A549 (cell line): ENCODE measurements at regions of chr7 and their contacts with region 1.

Region 1: DNA sequence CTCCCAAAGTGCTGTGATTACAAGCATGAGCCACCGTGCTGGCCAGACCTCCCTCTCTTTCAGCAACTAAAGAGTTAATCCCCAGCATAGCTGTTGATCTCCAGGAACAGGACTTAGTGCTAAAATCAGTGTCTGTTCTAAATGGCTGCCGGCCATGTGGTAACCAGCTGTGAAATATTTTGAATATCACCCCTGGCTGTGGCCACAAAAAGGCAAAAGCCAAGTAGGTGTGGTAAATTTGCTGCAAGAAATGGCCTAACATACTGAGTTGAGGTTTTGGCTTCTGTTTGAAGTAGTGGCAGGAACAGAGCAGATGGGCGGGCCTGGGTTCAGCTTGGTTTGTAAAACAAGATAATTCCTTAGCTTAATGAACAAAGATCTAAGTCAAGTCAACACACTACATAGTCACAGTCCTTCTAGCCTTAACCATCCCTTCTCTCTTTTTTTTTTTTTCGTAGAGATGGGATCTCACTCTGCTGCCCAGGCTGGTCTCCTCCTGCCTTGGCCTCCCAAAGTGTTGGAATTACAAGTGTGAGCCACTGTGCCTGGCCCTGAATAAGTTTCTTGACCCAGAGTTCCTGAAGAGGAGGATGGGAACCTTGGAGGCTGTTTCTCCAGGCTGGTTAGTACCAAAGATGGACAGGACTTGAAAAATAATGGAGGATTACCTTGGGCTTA is 22.7 kb upstream of the AGFG2 start:
- DNase-seq: peak in 1 of 2 experiments; percentile 14
- ATAC-seq: peak in 1 of 2 experiments; percentile 51; a peak in 3 of 6 replicates
- H3K4me3 ChIP-seq: no peak overlapping the region
- H3K27ac ChIP-seq: peak overlapping the region in 1 of 2 experiments; percentile 46; a peak in 3 of 6 replicates
- H3K4me1 ChIP-seq: peaks cover 8% of the 10 kb centered on the region
- CTCF ChIP-seq: no peak
- EP300 ChIP-seq: no peak
- POLR2A ChIP-seq: no peak
- RAD21 ChIP-seq: no peak

Region 2: DNA sequence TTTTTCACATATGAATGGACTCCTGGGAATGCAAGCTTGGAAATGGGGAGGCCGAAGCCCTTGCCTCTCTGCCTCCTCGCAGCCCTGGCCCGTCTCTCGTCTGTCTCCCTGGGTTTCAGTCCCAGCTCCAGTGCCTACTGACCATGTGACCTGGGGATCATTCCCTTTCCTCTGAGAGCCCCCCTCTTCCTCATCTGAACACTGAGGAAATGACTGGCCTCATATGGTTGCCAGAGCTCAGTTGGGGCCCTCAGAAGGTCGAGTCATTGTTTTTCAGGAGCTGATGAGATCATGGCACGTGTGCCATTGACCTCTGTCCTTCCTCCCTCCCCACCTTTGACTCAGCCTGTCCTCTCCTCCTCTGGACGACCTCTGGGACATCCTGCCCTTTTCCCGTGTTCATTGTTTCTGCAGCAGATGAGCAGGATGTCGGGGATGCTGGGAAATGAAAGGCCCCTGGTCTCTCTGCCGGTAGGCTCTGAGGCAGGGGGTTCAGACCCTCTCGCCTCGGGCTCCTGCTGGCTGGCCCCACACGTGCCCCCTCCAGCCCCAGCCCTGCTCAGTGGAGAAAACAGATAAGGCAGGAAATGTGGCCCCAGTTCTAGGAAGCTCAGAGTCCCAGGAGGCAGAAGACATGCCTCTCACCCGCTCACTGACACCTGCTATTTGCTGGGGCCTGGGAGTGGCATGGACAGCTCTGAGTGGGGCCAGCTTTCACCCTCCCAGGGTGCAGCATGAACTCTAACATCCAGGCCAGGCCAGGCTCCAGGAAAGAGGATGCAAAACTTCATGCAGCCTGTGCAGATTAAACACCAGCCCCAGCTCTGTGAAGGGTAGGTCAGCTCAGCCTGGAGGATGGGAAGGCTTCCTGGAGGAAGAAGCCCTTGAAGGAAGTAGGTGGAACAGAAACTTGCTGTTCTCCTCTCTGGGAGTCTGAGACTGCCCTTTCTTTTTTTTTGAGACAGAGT is 71.7 kb before region 1 on chr7:
- CTCF ChIA-PET with region 1: no interaction called
- POLR2A ChIA-PET with region 1: no interaction called
- DNase-seq: peak in 1 of 2 experiments; percentile 43
- ATAC-seq: peak; percentile 36 to 58
- H3K4me3 ChIP-seq: no peak overlapping the region
- H3K27ac ChIP-seq: peak overlapping the region in 1 of 2 experiments; percentile 63; a peak in 3 of 6 replicates
- H3K4me1 ChIP-seq: peaks cover 10% of the 10 kb centered on the region; the same call in 2 of the 3 replicates
- CTCF ChIP-seq: no peak
- EP300 ChIP-seq: no peak
- POLR2A ChIP-seq: no peak
- RAD21 ChIP-seq: no peak

Region 3: GRCh38 chr7:100532165-100533022 is 16.1 kb after region 1 on chr7:
- CTCF ChIA-PET with region 1: interaction called, 10 read pairs
- POLR2A ChIA-PET with region 1: no interaction called
- DNase-seq: no peak
- ATAC-seq: no peak
- H3K4me3 ChIP-seq: no peak overlapping the region
- H3K27ac ChIP-seq: no peak overlapping the region
- H3K4me1 ChIP-seq: no peaks in the 10 kb centered on the region
- CTCF ChIP-seq: no peak
- EP300 ChIP-seq: no peak
- POLR2A ChIP-seq: no peak
- RAD21 ChIP-seq: no peak